CD8-positive, alpha-beta memory T cell (primary cell): ENCODE measurements at regions of chr6 and their contacts with region 1.

Region 1: DNA sequence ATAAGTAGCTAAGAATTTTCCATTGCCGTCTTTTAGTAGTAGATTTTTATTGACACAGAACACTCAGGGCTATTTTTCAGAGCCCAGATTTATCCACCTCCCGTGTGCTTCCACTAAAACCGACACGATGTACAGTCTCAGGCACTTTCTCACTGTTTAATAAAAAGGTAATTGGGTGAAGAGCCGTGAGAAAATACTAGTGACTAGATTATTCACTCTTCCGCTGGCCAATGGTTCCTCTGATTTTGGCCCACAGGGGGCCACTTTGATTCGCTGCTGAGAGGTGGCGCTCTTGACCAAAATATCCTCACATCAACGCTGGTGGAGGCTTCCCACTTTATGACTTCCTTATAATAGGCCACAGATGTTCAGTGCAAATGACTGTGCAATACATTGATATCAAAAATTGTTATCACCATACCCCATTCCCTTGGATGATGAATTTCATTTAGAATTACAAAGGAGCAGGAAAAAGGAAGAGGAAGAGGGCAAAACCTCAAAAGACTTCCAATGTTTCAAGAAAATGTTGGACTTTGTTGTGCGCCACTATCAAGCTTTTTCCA is 12.3 kb upstream of the HDDC2 start:
- DNase-seq: peak in 4 of 5 donors; percentile 5 to 47 (median 11)
- H3K4me3 ChIP-seq: no peak overlapping the region
- H3K4me3 Mint-ChIP-seq: no peak overlapping the region
- H3K27ac ChIP-seq: no peak overlapping the region
- H3K27ac Mint-ChIP-seq: no peak overlapping the region
- H3K4me1 ChIP-seq: no peaks in the 10 kb centered on the region
- H3K4me1 Mint-ChIP-seq: peaks cover 0 to 4% (median 0%) of the 10 kb centered on the region in 3 donors
- H3K27me3 ChIP-seq: peaks cover 8% of the 10 kb centered on the region
- H3K27me3 Mint-ChIP-seq: peaks cover 5 to 30% of the 10 kb centered on the region in 2 donors

Region 2: DNA sequence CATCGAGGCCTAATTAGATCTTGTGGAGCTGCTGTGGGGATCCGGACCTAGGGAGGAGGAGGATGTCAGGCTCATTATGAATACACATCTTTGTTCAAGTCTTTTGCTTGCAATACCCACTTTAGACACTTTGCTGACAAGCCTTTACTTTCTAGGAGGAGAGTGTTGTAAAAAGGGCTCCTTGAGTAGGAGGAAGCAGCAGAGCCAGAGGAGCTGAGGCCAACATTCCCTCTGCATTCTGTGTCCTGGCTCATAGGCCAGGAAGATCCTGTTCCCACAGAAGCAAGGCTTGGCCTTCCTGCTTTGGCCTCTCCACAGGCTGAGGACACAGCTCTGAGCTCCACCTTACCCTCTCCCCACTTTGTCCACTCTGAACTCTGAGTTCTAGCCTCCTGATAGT is 93.4 kb before region 1 on chr6:
- CTCF ChIA-PET with region 1: no interaction called
- POLR2A ChIA-PET with region 1: no interaction called
- DNase-seq: no peak
- H3K4me3 ChIP-seq: no peak overlapping the region
- H3K4me3 Mint-ChIP-seq: no peak overlapping the region
- H3K27ac ChIP-seq: no peak overlapping the region
- H3K27ac Mint-ChIP-seq: peak overlapping the region in 1 of 8 donors; percentile 51
- H3K4me1 ChIP-seq: no peaks in the 10 kb centered on the region
- H3K4me1 Mint-ChIP-seq: no peaks in the 10 kb centered on the region
- H3K27me3 ChIP-seq: no peaks in the 10 kb centered on the region
- H3K27me3 Mint-ChIP-seq: peaks cover 5 to 14% of the 10 kb centered on the region in 2 donors

Region 3: GRCh38 chr6:125301435-125302391 is 12.4 kb before region 1 on chr6 and contains the start of gene HDDC2:
- CTCF ChIA-PET with region 1: interaction called, 22 read pairs
- POLR2A ChIA-PET with region 1: no interaction called
- DNase-seq: peak; percentile 30 to 56 (median 38)
- H3K4me3 ChIP-seq: peak within 1 kb of the TSS; percentile 62
- H3K4me3 Mint-ChIP-seq: peak within 1 kb of the TSS; percentile 88 to 98 (median 94)
- H3K27ac ChIP-seq: peak within 1 kb of the TSS; percentile 82
- H3K27ac Mint-ChIP-seq: peak within 1 kb of the TSS; percentile 64 to 98 (median 94)
- H3K4me1 ChIP-seq: peaks cover 41% of the 10 kb centered on the region
- H3K4me1 Mint-ChIP-seq: peaks cover 54 to 63% (median 59%) of the 10 kb centered on the region in 3 donors
- H3K27me3 ChIP-seq: no peaks in the 10 kb centered on the region
- H3K27me3 Mint-ChIP-seq: peaks cover 0 to 20% of the 10 kb centered on the region in 2 donors
- total RNA-seq, gene HDDC2: 99.9 to 105 TPM

Region 4: DNA sequence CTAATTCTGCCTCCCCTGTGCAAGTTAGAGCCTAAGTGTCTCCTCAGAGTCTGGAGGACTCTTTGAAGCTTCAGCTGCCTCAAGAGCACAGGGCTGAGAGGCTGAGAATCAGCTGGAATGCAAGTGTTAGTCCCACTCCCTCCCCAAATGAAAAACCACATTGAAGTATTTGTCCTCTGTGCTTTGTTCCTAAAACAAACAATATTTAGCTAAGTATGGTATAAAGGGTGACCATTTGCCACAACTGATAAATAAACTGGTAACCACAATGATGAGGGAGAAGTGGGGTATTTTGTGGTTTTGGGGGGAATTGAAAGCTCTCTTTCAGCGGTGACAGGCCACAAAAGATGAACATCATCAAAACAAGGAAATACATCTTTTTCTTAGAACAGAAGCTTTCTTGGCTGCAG is 79.4 kb after region 1 on chr6:
- CTCF ChIA-PET with region 1: no interaction called
- POLR2A ChIA-PET with region 1: no interaction called
- DNase-seq: no peak
- H3K4me3 ChIP-seq: no peak overlapping the region
- H3K4me3 Mint-ChIP-seq: no peak overlapping the region
- H3K27ac ChIP-seq: no peak overlapping the region
- H3K27ac Mint-ChIP-seq: no peak overlapping the region
- H3K4me1 ChIP-seq: no peaks in the 10 kb centered on the region
- H3K4me1 Mint-ChIP-seq: peaks cover 6 to 7% (median 6%) of the 10 kb centered on the region in 3 donors
- H3K27me3 ChIP-seq: no peaks in the 10 kb centered on the region
- H3K27me3 Mint-ChIP-seq: peaks cover 4 to 26% of the 10 kb centered on the region in 2 donors

Region 5: DNA sequence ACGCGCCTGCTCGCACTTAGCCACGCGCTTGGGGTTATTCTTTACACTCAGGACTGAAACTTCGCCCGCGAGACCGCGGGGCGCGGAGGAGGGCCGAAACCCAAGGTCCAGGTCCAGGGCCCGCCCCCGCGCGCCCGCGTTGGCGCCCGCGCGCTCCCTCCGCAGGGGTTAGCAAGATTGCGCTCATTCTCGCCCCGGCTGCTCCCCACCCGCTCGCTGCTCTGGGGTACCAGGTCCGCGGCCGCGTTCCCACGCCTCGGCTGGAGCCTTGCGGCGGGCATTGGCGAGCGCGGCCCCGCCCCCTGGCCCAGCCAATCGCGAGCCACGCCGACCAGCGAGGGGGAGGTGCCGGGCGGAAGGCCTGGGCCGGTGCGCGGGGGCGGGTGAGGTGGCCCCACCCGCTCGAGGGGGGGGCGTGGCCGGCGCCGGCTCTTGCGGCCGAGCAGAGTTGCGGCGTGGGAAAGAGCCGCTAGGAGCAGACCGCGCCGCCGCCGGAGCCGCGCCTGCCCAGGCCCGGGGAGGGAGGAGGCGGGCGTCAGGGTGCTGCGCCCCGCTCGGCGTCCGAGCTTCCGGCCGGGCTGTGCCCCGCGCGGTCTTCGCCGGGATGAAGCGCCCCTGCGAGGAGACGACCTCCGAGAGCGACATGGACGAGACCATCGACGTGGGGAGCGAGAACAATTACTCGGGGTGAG is 435.2 kb after region 1 on chr6 and contains the start of gene HEY2:
- CTCF ChIA-PET with region 1: interaction called, 60 read pairs
- POLR2A ChIA-PET with region 1: interaction called, 4 read pairs
- DNase-seq: peak; percentile 70 to 84 (median 79)
- H3K4me3 ChIP-seq: peak within 1 kb of the TSS; percentile 63
- H3K4me3 Mint-ChIP-seq: peak within 1 kb of the TSS; percentile 87 to 94 (median 91)
- H3K27ac ChIP-seq: no peak within 1 kb of the TSS
- H3K27ac Mint-ChIP-seq: peak within 1 kb of the TSS; percentile 65 to 95 (median 80)
- H3K4me1 ChIP-seq: peaks cover 26% of the 10 kb centered on the region
- H3K4me1 Mint-ChIP-seq: peaks cover 32 to 49% (median 42%) of the 10 kb centered on the region in 3 donors
- H3K27me3 ChIP-seq: peaks cover 37% of the 10 kb centered on the region
- H3K27me3 Mint-ChIP-seq: peaks cover 50 to 70% of the 10 kb centered on the region in 2 donors
- total RNA-seq, gene HEY2: 0.09 TPM

Region 6: DNA sequence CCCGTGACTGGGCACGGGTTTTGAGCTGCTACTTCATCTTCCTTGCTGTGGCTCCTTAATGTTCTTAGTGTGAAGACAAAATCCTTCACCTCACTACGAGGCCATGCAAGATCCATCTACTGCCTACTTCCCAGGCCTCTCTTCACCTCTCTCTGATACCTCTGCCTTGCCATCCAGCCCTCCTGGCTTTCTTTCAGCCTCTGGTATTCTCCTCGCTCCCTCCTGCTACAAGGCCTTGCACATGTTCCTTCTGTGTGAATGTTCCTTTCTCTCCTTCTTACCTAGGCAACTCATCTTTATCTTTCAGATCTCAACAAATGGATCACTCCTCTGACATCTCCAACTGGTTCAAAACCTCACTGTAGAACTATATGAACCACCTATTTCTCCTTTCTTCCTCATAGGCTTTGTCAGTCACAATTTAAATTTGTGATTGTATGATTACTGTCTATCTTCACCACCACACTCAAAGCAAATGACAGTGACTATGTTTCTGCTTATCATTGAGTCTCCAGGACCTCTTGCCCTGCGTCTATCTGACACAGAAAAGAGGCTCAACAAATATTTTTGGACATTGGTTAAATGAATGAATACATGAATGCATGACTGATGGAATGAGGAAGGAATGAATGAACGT is 455.2 kb after region 1 on chr6:
- CTCF ChIA-PET with region 1: interaction called, 12 read pairs
- POLR2A ChIA-PET with region 1: no interaction called
- DNase-seq: no peak
- H3K4me3 ChIP-seq: no peak overlapping the region
- H3K4me3 Mint-ChIP-seq: no peak overlapping the region
- H3K27ac ChIP-seq: no peak overlapping the region
- H3K27ac Mint-ChIP-seq: no peak overlapping the region
- H3K4me1 ChIP-seq: no peaks in the 10 kb centered on the region
- H3K4me1 Mint-ChIP-seq: no peaks in the 10 kb centered on the region
- H3K27me3 ChIP-seq: no peaks in the 10 kb centered on the region
- H3K27me3 Mint-ChIP-seq: peaks cover 8 to 39% of the 10 kb centered on the region in 2 donors